Activated B cell treated with CpG ODN at 0.5 μM for 24 hours (primary cell): ENCODE measurements at regions of chr1 and their contacts with region 1.

Region 1: GRCh38 chr1:84506002-84506728 is at the starts of genes GNG5 and SPATA1:
- DNase-seq: peak; percentile 98
- ATAC-seq: peak; percentile 87
- H3K4me3 Mint-ChIP-seq: peak within 1 kb of the TSS; percentile 96
- H3K27ac Mint-ChIP-seq: peak within 1 kb of the TSS; percentile 98
- H3K4me1 Mint-ChIP-seq: peaks cover 37% of the 10 kb centered on the region
- H3K27me3 Mint-ChIP-seq: no peaks in the 10 kb centered on the region
- CTCF ChIP-seq: no peak
- total RNA-seq, gene GNG5: 57.0 and 63.5 TPM in 2 replicates
- total RNA-seq, gene SPATA1: 4.6 and 4.7 TPM in 2 replicates

Region 2: GRCh38 chr1:84156210-84156621 is 349.9 kb before region 1 on chr1:
- CTCF ChIA-PET with region 1: no interaction called
- POLR2A ChIA-PET with region 1: no interaction called
- intact Hi-C with region 1: loop called (anchors 5 kb)
- DNase-seq: no peak
- ATAC-seq: peak; percentile 76
- H3K4me3 Mint-ChIP-seq: no peak overlapping the region
- H3K27ac Mint-ChIP-seq: peak overlapping the region; percentile 15
- H3K4me1 Mint-ChIP-seq: peaks cover 83% of the 10 kb centered on the region
- H3K27me3 Mint-ChIP-seq: no peaks in the 10 kb centered on the region
- CTCF ChIP-seq: no peak

Region 3: DNA sequence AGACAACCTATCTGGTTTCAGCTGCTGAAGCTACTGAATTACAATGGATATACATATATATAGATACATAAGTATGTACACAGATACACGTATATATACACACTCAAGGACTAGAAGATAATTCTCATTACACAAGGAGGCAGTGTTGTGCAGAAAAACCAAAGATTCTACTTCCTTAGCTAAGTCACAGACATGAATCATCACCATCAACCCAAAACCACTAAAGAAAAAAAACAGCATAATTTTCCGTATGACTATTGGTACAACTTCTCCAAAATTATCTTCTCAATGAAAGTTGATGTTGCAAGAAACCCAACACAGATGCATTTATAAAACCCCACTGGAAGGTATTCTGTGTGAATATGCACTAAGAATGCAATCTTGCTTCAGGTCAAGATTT is 63.9 kb before region 1 on chr1:
- CTCF ChIA-PET with region 1: interaction called, 8 read pairs
- POLR2A ChIA-PET with region 1: interaction called, 22 read pairs
- intact Hi-C with region 1: loop called (anchors 1 kb)
- DNase-seq: no peak
- ATAC-seq: peak; percentile 94
- H3K4me3 Mint-ChIP-seq: no peak overlapping the region
- H3K27ac Mint-ChIP-seq: peak overlapping the region; percentile 24
- H3K4me1 Mint-ChIP-seq: peaks cover 23% of the 10 kb centered on the region
- H3K27me3 Mint-ChIP-seq: peaks cover 5% of the 10 kb centered on the region
- CTCF ChIP-seq: no peak

Region 4: GRCh38 chr1:84573967-84574842 is 68.0 kb after region 1 on chr1 and contains the start of gene CTBS:
- CTCF ChIA-PET with region 1: interaction called, 10 read pairs
- POLR2A ChIA-PET with region 1: interaction called, 113 read pairs
- intact Hi-C with region 1: loop called (anchors 1 kb)
- DNase-seq: peak; percentile 81
- ATAC-seq: peak; percentile 91
- H3K4me3 Mint-ChIP-seq: peak within 1 kb of the TSS; percentile 96
- H3K27ac Mint-ChIP-seq: peak within 1 kb of the TSS; percentile 99
- H3K4me1 Mint-ChIP-seq: peaks cover 40% of the 10 kb centered on the region
- H3K27me3 Mint-ChIP-seq: no peaks in the 10 kb centered on the region
- CTCF ChIP-seq: no peak
- total RNA-seq, gene CTBS: 11.8 and 13.2 TPM in 2 replicates

Region 5: DNA sequence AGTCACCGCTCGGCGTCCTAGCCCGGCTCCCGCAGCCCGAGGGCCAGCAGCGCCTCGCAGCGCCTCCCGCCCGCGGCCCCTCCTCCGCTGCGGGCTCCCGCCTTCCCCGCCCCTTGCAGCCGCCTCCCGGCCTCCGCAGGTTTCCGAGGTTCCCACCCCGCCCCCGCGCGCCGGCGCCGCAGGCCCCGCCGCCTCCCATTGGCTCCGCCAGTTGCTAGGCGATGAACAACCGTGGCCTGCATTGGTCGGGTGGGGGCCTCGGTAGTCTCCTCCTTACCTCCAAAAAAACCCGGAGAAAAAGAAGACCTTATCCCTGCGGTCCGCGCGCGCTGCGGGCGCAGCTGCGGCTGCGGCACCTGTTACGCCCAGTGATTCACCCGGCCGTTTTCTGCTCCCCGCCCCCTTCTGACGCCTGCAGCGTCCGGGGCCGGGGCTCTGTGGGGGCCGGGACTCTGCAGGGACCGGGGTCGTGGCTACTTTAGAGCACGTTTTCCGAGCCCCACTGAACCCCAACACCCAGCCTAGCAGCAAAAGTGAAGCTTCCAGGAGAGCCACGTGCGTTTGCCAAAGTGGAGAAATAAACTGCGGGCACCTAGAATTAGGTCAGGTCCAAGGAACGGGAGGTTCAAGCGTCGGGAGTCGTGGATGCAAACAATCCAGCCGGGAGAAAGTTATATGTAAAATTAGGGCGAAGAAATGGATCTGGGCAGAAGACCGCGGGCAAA is 184.4 kb after region 1 on chr1 and contains the start of gene SSX2IP:
- CTCF ChIA-PET with region 1: interaction called, 4 read pairs
- POLR2A ChIA-PET with region 1: interaction called, 7 read pairs
- intact Hi-C with region 1: loop called (anchors 1 kb)
- DNase-seq: peak; percentile 100
- ATAC-seq: peak; percentile 86
- H3K4me3 Mint-ChIP-seq: peak within 1 kb of the TSS; percentile 91
- H3K27ac Mint-ChIP-seq: peak within 1 kb of the TSS; percentile 89
- H3K4me1 Mint-ChIP-seq: peaks cover 32% of the 10 kb centered on the region
- H3K27me3 Mint-ChIP-seq: no peaks in the 10 kb centered on the region
- CTCF ChIP-seq: no peak
- total RNA-seq, gene SSX2IP: 4.5 and 5.4 TPM in 2 replicates

Region 6: GRCh38 chr1:85259118-85259911 is 753.1 kb after region 1 on chr1 and contains the start of gene C1orf52:
- CTCF ChIA-PET with region 1: no interaction called
- POLR2A ChIA-PET with region 1: interaction called, 9 read pairs
- intact Hi-C with region 1: loop called (anchors 1 kb)
- DNase-seq: peak; percentile 99
- ATAC-seq: peak; percentile 96
- H3K4me3 Mint-ChIP-seq: peak within 1 kb of the TSS; percentile 98
- H3K27ac Mint-ChIP-seq: peak within 1 kb of the TSS; percentile 92
- H3K4me1 Mint-ChIP-seq: peaks cover 37% of the 10 kb centered on the region
- H3K27me3 Mint-ChIP-seq: no peaks in the 10 kb centered on the region
- CTCF ChIP-seq: peak; percentile 88
- total RNA-seq, gene C1orf52: 31.4 and 32.0 TPM in 2 replicates